ENCODE measurements at regions of chr4 and their contacts with region 1.

Region 1: GRCh38 chr4:38667085-38667893 is 3.3 kb downstream of the KLF3 start:
- DNase-seq: peak; percentile 64
- ATAC-seq: peak; percentile 63 to 69
- H3K4me3 ChIP-seq: peak overlapping the region; percentile 87
- H3K27ac ChIP-seq: peak overlapping the region; percentile 100
- H3K4me1 ChIP-seq: peaks cover 68% of the 10 kb centered on the region
- H3K27me3 ChIP-seq: no peaks in the 10 kb centered on the region
- CTCF ChIP-seq: no peak

Region 2: DNA sequence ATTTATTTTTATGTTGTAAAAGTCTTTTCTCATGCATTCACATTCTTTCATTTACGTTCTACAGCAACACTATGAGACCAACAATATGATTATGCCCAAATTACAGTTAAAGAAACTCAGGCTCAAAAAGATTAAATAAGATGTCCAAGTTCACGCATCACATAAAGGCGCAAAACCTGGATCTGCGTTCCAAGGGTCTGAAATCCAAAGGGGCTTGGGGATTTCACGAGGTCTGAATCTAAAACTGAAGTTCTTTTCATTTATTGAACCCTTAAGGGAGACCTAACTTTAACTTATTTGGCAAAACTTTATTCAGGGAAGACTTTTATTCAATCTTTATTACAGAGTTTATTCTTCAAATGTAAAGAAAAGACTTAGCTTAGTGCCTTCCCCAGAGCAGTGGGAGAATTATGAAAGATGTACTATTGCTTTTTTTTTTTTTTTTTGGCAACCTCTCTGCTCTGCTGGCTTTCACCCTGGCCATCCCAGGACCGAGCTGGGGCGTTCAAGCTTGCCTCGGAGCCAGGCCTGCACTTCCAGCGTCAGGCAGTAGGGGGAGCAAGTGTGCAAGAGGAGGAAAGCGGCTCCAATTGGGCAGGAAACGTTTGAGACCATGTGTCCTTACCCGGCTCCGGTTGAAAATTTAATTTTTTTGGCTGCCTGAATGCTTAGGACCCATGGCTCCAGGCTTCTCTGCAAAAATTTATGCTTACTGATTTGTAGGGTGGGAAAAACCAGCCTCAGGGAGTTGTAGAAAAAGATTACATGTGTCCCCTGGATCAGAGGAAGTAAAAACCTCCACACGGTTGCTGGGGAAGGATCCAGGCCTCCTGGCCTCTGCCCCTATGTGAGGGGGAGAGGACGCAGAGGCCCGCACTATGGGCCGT is 347.6 kb before region 1 on chr4:
- intact Hi-C with region 1: loop called (anchors 5 kb)
- DNase-seq: peak; percentile 93
- ATAC-seq: peak; percentile 92 to 96
- H3K4me3 ChIP-seq: peak overlapping the region; percentile 47
- H3K27ac ChIP-seq: peak overlapping the region; percentile 80
- H3K4me1 ChIP-seq: peaks cover 22% of the 10 kb centered on the region
- H3K27me3 ChIP-seq: no peaks in the 10 kb centered on the region
- CTCF ChIP-seq: peak; percentile 99

Measured in lower lobe of right lung (tissue), 2 donors.